ENCODE measurements at regions of chr2 and their contacts with region 1.

Region 1: DNA sequence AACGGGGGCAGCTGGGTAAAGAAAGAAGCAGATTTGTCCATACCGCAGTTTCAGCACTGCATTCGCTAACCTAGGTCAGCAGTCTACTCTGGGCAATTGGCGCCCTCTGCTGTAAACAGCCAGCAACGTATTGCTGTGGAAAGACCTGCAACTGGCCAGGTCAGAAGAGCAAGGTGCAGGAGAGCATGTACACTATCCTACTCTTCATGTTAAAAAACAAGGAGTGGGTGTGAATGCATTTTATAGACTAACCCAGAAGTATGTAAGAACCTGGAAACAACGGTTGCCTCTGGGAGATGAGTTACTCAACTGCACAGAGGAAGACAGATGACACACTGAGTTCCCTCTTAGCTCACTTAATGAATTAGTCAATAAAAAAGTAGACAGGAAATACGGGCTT is 6.2 kb downstream of the MRPS5 start:
- DNase-seq: peak; percentile 78
- CTCF ChIP-seq: peak; percentile 87

Region 2: GRCh38 chr2:94986392-94986963 is 128.9 kb before region 1 on chr2:
- CTCF ChIA-PET with region 1: interaction called, 11 read pairs
- POLR2A ChIA-PET with region 1: interaction called, 5 read pairs
- DNase-seq: peak; percentile 67
- CTCF ChIP-seq: peak; percentile 54

Region 3: GRCh38 chr2:95012881-95013550 is 102.4 kb before region 1 on chr2:
- CTCF ChIA-PET with region 1: interaction called, 12 read pairs
- POLR2A ChIA-PET with region 1: no interaction called
- DNase-seq: no peak
- CTCF ChIP-seq: no peak

Region 4: DNA sequence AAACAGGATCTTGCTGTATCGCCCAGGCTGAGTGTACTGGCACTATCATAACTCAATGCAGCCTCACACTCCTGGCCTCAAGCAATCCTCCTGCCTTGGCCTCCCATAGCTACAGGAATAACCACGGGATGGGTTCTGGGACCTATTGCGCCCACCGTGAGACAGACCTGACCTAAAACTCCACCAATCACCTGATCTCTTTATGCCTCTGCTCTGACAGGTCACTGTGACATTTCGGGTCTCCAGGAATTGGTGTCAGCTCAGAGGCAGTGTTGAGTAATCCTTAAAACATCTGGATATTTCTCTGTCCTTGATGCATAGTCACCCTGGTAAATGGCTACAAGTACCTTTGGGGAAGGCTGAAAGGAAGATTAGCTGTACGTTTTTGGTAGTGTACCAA is 11.4 kb after region 1 on chr2:
- CTCF ChIA-PET with region 1: interaction called, 14 read pairs
- POLR2A ChIA-PET with region 1: no interaction called
- DNase-seq: no peak
- CTCF ChIP-seq: no peak

Region 5: DNA sequence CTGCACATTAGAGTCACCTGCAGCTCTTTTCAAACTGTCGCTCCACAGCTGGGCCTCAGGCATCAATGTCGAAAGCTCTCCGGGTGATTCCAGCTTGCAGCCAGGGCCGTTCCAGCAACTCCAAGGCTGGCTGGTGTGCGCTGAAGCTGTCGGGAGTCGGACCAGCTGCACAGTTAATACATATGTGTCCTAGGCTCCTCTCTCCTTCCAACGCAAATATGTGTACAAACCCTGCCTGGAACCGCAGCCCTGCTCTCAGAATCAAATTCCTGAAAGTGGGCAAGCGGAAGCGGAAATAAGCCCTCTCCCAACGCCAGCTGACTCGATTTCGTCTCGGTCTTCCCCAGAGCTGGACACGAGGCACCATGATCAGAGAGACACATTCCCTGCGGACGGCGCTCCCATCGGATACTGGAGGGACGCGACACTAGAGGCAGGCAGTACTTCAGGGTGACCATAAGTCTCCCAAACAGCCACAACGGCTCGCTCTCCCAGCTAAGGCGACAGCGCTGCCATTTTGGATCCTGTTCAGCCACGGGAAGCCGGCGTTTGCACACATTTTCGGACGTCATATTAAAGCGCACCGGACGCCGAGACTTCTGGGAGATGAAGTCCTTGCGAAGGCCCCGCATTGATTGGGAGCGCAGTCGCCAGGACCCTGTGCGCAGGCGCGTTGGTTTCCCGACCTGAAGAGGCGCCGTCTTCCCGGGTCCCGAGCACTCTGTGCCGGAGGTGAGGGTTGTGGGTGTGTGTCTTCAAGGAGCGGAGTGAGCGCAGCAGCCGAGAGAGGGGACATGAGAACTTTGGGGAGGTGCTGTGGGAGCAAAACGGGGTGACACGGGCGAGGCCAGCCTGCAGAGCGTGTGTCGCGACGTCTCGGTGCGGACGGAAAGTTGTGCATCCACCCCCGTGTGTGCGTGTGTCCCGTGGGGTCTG is 50.0 kb after region 1 on chr2 and contains the start of gene ZNF2:
- CTCF ChIA-PET with region 1: interaction called, 10 read pairs
- POLR2A ChIA-PET with region 1: no interaction called
- DNase-seq: peak; percentile 98
- CTCF ChIP-seq: no peak